ENCODE measurements at regions of chr5 and their contacts with region 1.

Region 1: GRCh38 chr5:179265514-179266290 is 79.6 kb downstream of the ADAMTS2 start:
- DNase-seq: peak in 1 of 2 experiments; percentile 71
- H3K4me3 ChIP-seq: no peak overlapping the region
- H3K27ac ChIP-seq: no peak overlapping the region
- H3K4me1 ChIP-seq: peaks cover 0 to 20% (median 11%) of the 10 kb centered on the region in 4 experiments; a peak in 6 of 7 replicates
- H3K27me3 ChIP-seq: no peaks in the 10 kb centered on the region
- CTCF ChIP-seq: no peak
- EP300 ChIP-seq: no peak
- POLR2A ChIP-seq: no peak
- RAD21 ChIP-seq: no peak

Region 2: GRCh38 chr5:179228341-179229121 is 37.2 kb before region 1 on chr5:
- CTCF ChIA-PET with region 1: interaction called, 10 read pairs
- POLR2A ChIA-PET with region 1: no interaction called
- DNase-seq: no peak
- H3K4me3 ChIP-seq: no peak overlapping the region
- H3K27ac ChIP-seq: no peak overlapping the region
- H3K4me1 ChIP-seq: peaks cover 0 to 20% (median 13%) of the 10 kb centered on the region in 4 experiments; a peak in 6 of 7 replicates
- H3K27me3 ChIP-seq: no peaks in the 10 kb centered on the region
- CTCF ChIP-seq: 0 out of 4 replicates have a peak, but pooled peaks of 1 of the 3 experiments have one; percentile 2
- EP300 ChIP-seq: no peak
- POLR2A ChIP-seq: no peak
- RAD21 ChIP-seq: peak in 1 of 2 experiments; percentile 41; a peak in 2 of 4 replicates

Region 3: GRCh38 chr5:179243333-179243732 is 22.4 kb before region 1 on chr5:
- CTCF ChIA-PET with region 1: interaction called, 12 read pairs
- POLR2A ChIA-PET with region 1: interaction called, 3 read pairs
- DNase-seq: no peak
- H3K4me3 ChIP-seq: no peak overlapping the region
- H3K27ac ChIP-seq: no peak overlapping the region
- H3K4me1 ChIP-seq: peaks cover 0 to 7% (median 3%) of the 10 kb centered on the region in 4 experiments; a peak in 4 of 7 replicates
- H3K27me3 ChIP-seq: no peaks in the 10 kb centered on the region
- CTCF ChIP-seq: no peak
- EP300 ChIP-seq: no peak
- POLR2A ChIP-seq: no peak
- RAD21 ChIP-seq: no peak

Region 4: DNA sequence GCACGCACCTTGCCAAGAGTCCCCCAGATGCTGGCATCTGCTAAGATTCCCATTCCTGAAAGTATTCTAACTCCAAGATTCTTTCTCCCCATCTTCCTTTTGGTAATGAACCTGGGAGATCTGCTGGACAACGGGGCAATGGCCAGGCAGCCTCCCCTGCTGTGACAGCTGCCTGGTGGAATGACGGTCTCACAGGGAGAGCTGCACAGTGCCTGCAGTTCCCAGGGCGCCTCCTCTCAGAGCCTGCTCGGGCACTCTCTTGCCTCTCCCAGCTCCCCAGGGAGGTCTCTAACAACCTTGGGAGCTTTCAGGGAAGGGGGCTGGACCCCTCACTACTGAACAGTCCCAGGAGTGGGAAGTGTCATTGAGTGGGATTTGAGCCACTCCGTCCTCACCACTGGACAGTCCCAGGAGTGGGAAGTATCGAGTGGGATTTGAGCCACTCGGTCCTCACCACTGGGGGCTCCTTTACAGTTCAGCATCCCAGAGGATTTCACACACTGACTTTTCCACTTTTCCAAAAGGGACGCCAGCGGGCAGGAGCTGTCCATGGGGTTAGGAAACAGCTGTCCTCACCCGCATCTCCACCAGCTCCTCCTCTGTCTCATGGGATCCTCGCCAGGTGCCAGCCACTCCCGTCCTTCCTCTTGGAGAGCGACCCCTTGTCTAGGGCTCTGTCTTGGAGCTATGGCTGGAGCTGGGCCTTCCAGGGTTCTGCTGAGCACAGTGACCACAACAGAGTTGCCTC is 13.8 kb after region 1 on chr5:
- CTCF ChIA-PET with region 1: interaction called, 10 read pairs
- POLR2A ChIA-PET with region 1: interaction called, 3 read pairs
- DNase-seq: no peak
- H3K4me3 ChIP-seq: no peak overlapping the region
- H3K27ac ChIP-seq: no peak overlapping the region
- H3K4me1 ChIP-seq: no peaks in the 10 kb centered on the region
- H3K27me3 ChIP-seq: no peaks in the 10 kb centered on the region
- CTCF ChIP-seq: no peak
- EP300 ChIP-seq: no peak
- POLR2A ChIP-seq: no peak
- RAD21 ChIP-seq: no peak